Gastrocnemius medialis (tissue), 4 donors: ENCODE measurements at regions of chr1 and their contacts with region 1.

Region 1: GRCh38 chr1:9518454-9518998 is 20.7 kb upstream of the SLC25A33 start:
- DNase-seq: peak; percentile 96 to 99
- ATAC-seq: peak; percentile 81 to 83
- H3K4me3 ChIP-seq: peak overlapping the region in 1 of 4 donors; percentile 14
- H3K27ac ChIP-seq: peak overlapping the region; percentile 89 to 99 (median 94)
- H3K4me1 ChIP-seq: peaks cover 17 to 21% of the 10 kb centered on the region in 2 donors
- H3K27me3 ChIP-seq: no peaks in the 10 kb centered on the region
- CTCF ChIP-seq: no peak
- POLR2A ChIP-seq: peak; percentile 56 to 73

Region 2: DNA sequence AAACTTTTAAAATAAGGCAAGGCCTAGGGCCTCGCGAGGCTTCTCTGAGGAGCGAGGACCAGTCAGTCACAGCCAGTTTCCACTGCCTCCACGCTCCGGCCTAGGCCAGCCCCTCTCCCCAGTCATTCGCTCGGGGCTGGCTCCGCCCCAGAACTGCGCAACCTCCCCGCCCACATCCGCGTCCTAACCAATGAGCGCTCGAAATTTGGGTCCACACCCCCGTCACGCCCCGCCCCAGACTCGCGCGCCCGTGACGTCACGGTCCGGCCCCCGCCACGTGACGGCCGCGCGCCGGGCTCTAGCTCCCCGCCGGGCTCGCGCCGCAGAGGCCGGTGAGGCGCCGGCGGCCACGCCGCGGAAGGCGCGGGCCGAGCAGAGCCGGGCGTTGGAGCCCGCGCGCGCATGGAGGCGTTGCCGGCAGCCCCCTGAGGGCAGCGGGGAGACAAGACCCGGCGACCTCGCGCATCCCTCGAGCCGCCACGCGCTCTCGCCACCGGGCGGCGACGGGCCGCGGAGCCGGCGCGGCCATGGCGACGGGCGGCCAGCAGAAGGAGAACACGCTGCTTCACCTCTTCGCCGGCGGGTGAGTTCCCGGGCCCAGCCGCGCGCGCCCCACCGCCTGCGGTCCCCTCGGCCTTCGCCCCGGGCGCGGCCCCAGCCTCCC is 20.8 kb after region 1 on chr1 and contains the start of gene SLC25A33:
- in situ Hi-C with region 1: no loop called
- intact Hi-C with region 1: loop called (anchors 1 kb)
- DNase-seq: peak; percentile 96 to 97
- ATAC-seq: peak; percentile 92 to 93
- H3K4me3 ChIP-seq: peak within 1 kb of the TSS; percentile 75 to 89 (median 76)
- H3K27ac ChIP-seq: peak within 1 kb of the TSS; percentile 91 to 98 (median 95)
- H3K4me1 ChIP-seq: peaks cover 26 to 28% of the 10 kb centered on the region in 2 donors
- H3K27me3 ChIP-seq: no peaks in the 10 kb centered on the region
- CTCF ChIP-seq: peak in 3 of 5 experiments; percentile 20 to 60 (median 31)
- POLR2A ChIP-seq: peak; percentile 100
- total RNA-seq, gene SLC25A33: 40.3 to 88.6 (median 49.1) TPM